Ascending aorta (tissue), 2 donors: ENCODE measurements at regions of chr17 and their contacts with region 1.

Region 1: DNA sequence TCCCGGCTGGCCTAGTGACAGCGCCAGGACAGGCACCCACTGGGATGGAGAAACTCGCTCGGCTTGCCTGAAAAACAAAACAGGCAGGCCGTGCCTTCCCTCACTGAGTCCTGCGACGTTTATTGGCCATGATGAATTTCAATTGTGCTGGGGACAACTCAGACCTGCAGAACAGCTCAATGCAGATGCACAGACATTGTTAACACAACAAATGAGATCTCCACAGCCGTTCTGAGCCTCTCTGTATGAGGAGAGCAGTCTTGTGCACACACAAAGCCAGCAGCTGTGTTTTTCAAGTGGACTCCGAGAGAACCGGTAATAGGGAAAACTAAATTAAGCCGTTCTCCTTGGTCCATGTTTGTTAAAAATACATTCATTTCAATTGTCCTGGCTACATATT is 15.9 kb downstream of the SHISA6 start:
- DNase-seq: no peak
- H3K4me3 ChIP-seq: no peak overlapping the region
- H3K27ac ChIP-seq: no peak overlapping the region
- H3K4me1 ChIP-seq: no peaks in the 10 kb centered on the region
- H3K27me3 ChIP-seq: no peaks in the 10 kb centered on the region
- CTCF ChIP-seq: no peak

Region 2: GRCh38 chr17:11221721-11222120 is 35.2 kb before region 1 on chr17:
- intact Hi-C with region 1: loop called (anchors 1 kb)
- DNase-seq: no peak
- H3K4me3 ChIP-seq: no peak overlapping the region
- H3K27ac ChIP-seq: no peak overlapping the region
- H3K4me1 ChIP-seq: no peaks in the 10 kb centered on the region
- H3K27me3 ChIP-seq: no peaks in the 10 kb centered on the region
- CTCF ChIP-seq: no peak